ENCODE measurements at regions of chr12 and their contacts with region 1.

Region 1: GRCh38 chr12:52390739-52391617 is 5.5 kb upstream of the KRT84 start:
- DNase-seq: peak in 1 of 2 experiments; percentile 47
- H3K4me3 ChIP-seq: no peak overlapping the region
- H3K4me3 Mint-ChIP-seq: no peak overlapping the region
- H3K27ac Mint-ChIP-seq: no peak overlapping the region
- H3K4me1 ChIP-seq: no peaks in the 10 kb centered on the region
- H3K4me1 Mint-ChIP-seq: no peaks in the 10 kb centered on the region
- H3K27me3 ChIP-seq: no peaks in the 10 kb centered on the region; the same call in 1 of the 2 replicates
- H3K27me3 Mint-ChIP-seq: peaks cover 2% of the 10 kb centered on the region
- CTCF ChIP-seq: peak; percentile 73 to 77

Region 2: DNA sequence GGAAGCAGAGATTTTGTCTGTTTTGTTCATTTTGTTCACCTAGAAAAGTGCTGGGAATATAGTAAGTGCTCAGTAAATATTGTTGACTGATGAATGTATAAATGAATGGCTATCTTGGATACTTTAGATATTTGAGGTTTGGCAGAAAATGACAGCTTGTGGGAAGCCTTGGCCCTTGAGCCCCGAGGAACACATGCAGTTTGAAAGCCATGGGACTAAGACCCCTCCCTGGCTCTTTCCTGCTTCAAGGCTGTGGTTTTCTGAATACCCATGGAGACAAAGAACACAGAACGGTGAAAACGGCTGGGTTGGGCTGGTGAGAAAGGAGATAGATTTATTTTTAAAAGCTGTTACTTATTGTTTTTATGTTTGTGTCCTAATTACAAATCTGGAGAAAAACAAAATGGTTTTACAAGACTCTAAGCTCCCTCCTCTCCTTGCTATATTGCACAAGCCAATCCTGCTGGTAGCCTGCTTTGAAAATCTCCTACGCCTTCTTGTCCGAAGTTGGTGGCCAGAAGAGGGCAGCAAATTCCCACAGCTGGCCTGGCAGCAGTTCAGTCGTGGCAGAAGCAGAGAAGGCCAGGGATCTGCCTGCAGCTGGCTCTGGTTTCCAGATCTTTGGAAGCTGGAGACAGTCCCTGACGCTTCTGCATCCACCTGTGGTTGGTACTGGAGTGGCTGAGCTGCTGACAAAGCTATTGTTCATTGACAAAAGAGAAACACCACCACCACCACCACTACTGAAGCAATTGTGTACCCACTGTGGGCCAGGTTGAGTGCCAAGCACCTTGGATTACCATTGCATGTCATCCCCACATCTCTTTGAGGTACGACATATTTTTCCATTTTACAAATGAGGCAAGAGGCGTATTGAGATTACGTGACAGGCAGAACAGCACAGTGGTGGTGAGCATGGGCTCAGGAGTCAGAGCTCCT is 18.5 kb before region 1 on chr12:
- CTCF ChIA-PET with region 1: interaction called, 13 read pairs
- POLR2A ChIA-PET with region 1: no interaction called
- intact Hi-C with region 1: no loop called
- DNase-seq: peak; percentile 78 to 86
- H3K4me3 ChIP-seq: no peak overlapping the region
- H3K4me3 Mint-ChIP-seq: no peak overlapping the region
- H3K27ac Mint-ChIP-seq: no peak overlapping the region
- H3K4me1 ChIP-seq: no peaks in the 10 kb centered on the region
- H3K4me1 Mint-ChIP-seq: peaks cover 8% of the 10 kb centered on the region
- H3K27me3 ChIP-seq: no peaks in the 10 kb centered on the region
- H3K27me3 Mint-ChIP-seq: peaks cover 3% of the 10 kb centered on the region
- CTCF ChIP-seq: peak; percentile 76 to 91

Region 3: GRCh38 chr12:52442600-52443061 is 51.7 kb after region 1 on chr12:
- CTCF ChIA-PET with region 1: interaction called, 4 read pairs
- POLR2A ChIA-PET with region 1: no interaction called
- intact Hi-C with region 1: loop called (anchors 5 kb)
- DNase-seq: peak; percentile 34 to 65
- H3K4me3 ChIP-seq: no peak overlapping the region
- H3K4me3 Mint-ChIP-seq: no peak overlapping the region
- H3K27ac Mint-ChIP-seq: peak overlapping the region; percentile 87
- H3K4me1 ChIP-seq: peaks cover 37% of the 10 kb centered on the region
- H3K4me1 Mint-ChIP-seq: peaks cover 28% of the 10 kb centered on the region
- H3K27me3 ChIP-seq: no peaks in the 10 kb centered on the region
- H3K27me3 Mint-ChIP-seq: no peaks in the 10 kb centered on the region
- CTCF ChIP-seq: no peak

Region 4: GRCh38 chr12:52461691-52462090 is 70.7 kb after region 1 on chr12:
- CTCF ChIA-PET with region 1: interaction called, 15 read pairs
- POLR2A ChIA-PET with region 1: no interaction called
- intact Hi-C with region 1: loop called (anchors 5 kb)
- DNase-seq: peak in 1 of 2 experiments; percentile 33
- H3K4me3 ChIP-seq: no peak overlapping the region
- H3K4me3 Mint-ChIP-seq: no peak overlapping the region
- H3K27ac Mint-ChIP-seq: no peak overlapping the region
- H3K4me1 ChIP-seq: no peaks in the 10 kb centered on the region
- H3K4me1 Mint-ChIP-seq: no peaks in the 10 kb centered on the region
- H3K27me3 ChIP-seq: no peaks in the 10 kb centered on the region
- H3K27me3 Mint-ChIP-seq: peaks cover 12% of the 10 kb centered on the region
- CTCF ChIP-seq: peak in 1 of 2 experiments; percentile 32